ENCODE measurements at regions of chr6 and their contacts with region 1.

Region 1: GRCh38 chr6:3438190-3439167 is 18.4 kb downstream of the SLC22A23 start:
- DNase-seq: peak; percentile 88
- ATAC-seq: peak; percentile 97
- H3K4me3 ChIP-seq: no peak overlapping the region
- H3K27ac ChIP-seq: peak overlapping the region; percentile 78
- H3K4me1 ChIP-seq: peaks cover 32% of the 10 kb centered on the region
- H3K27me3 ChIP-seq: no peaks in the 10 kb centered on the region
- CTCF ChIP-seq: no peak

Region 2: DNA sequence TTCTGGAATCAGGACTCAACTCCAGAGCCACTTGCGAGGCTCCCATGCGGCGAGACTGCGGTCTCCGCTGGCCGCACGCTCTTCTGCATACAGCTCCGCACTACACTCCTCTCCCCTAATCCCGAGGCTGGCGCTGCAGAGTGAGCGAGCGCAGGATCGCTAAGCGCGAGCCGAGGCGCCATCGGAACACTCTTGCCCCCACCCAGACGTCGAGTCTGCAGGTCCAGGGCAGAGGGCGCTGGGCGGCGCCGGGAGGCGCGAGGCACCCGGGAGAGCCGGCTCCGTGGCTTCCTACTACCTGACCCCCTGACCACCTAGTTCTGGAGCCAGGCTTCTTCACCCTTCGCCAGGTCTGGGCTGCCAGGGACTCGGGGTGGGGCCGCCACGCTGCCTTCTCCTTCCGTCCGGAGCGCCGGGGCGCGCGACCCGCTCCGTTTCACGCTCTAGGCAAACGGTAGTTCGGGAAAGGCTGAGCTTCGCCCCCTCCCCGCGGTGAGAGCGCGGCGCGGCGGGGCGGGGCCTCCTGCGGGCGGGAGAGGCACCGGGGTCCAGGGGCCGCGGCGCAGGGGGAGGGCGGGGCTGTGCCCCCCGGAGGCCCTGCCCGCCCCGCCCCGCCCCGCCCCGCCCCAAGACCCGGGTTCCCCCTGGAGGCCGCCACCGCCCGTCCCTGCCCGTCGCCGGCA is 275.8 kb before region 1 on chr6:
- CTCF ChIA-PET with region 1: no interaction called
- POLR2A ChIA-PET with region 1: interaction called, 12 read pairs
- intact Hi-C with region 1: no loop called
- DNase-seq: peak; percentile 78
- ATAC-seq: peak; percentile 82
- H3K4me3 ChIP-seq: peak overlapping the region; percentile 74
- H3K27ac ChIP-seq: peak overlapping the region; percentile 69
- H3K4me1 ChIP-seq: peaks cover 27% of the 10 kb centered on the region
- H3K27me3 ChIP-seq: no peaks in the 10 kb centered on the region
- CTCF ChIP-seq: no peak

Region 3: DNA sequence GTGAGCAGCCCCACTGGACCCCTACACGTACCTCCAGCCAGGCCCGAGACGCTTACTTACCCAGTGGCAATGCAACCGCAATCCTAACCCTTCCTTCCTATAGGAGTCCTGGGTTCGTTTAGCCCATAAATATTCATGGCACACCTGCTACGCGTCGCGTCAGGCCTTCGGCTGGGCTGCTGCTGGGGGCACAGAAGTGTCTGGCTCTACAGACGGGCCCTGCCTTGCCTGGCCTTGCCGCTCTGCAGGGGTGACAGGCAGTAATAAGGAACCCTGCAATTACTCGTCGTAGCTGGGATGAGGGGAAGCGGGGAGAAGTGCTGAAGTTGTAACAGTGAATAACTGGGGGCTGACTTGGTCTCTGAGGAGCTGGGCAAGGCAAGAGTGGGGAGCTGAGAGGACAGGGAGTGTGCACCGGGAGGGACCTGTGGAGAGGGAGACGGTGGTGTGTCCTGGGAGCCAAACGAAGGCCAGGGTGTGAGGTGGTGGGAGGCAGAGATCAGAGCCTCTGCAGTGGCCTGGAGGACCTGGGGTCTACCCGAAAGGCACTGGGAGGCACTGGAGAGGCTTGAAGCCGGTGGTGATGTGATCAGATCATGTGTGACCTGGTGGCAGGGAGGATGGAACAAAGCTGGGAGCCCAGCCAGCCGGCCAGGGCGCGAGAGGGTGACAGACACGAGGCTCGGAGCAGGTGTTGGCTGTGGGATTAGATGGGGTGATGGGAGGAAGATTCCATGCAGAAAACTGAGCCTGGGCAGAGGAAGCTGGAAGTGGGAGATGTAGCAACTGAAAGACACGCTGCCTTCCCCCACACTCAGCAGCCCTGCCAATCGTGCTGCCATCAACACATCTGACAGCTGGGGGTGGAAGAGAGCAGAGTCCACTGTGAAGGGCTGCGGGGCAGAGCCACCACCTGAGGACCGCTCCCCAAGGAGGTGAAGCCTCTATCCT is 143.3 kb before region 1 on chr6:
- CTCF ChIA-PET with region 1: no interaction called
- POLR2A ChIA-PET with region 1: interaction called, 13 read pairs
- intact Hi-C with region 1: no loop called
- DNase-seq: peak; percentile 20
- ATAC-seq: no peak; the same call in 1 of the 2 replicates
- H3K4me3 ChIP-seq: no peak overlapping the region
- H3K27ac ChIP-seq: no peak overlapping the region
- H3K4me1 ChIP-seq: peaks cover 18% of the 10 kb centered on the region
- H3K27me3 ChIP-seq: no peaks in the 10 kb centered on the region
- CTCF ChIP-seq: peak; percentile 41

Region 4: GRCh38 chr6:3356056-3356761 is 82.3 kb before region 1 on chr6:
- CTCF ChIA-PET with region 1: no interaction called
- POLR2A ChIA-PET with region 1: no interaction called
- intact Hi-C with region 1: no loop called
- DNase-seq: peak; percentile 57
- ATAC-seq: peak; percentile 57
- H3K4me3 ChIP-seq: peak overlapping the region; percentile 60
- H3K27ac ChIP-seq: peak overlapping the region; percentile 75
- H3K4me1 ChIP-seq: peaks cover 23% of the 10 kb centered on the region
- H3K27me3 ChIP-seq: no peaks in the 10 kb centered on the region
- CTCF ChIP-seq: no peak

Region 5: DNA sequence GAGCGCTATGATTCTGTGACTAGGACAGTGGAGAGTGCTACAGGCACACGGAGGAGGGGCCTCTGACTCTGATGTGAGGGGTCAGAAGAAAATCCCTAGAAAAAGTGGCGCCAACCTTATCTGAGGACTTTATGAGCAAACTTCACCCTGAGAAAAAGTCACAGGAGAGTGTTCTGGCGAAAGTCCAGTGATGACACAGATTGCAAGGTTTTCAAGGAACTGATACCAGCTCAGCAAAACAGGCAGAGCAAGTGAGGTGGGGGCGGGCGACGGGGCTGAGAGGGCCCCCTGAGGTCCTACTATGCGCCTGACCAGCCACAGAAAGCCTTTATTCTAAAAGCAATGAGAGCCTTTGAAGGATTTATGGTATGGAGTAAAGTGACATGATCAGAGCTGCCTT is 55.0 kb before region 1 on chr6:
- CTCF ChIA-PET with region 1: no interaction called
- POLR2A ChIA-PET with region 1: no interaction called
- intact Hi-C with region 1: loop called (anchors 5 kb)
- DNase-seq: peak; percentile 85
- ATAC-seq: peak; percentile 11
- H3K4me3 ChIP-seq: no peak overlapping the region
- H3K27ac ChIP-seq: peak overlapping the region; percentile 94
- H3K4me1 ChIP-seq: peaks cover 56% of the 10 kb centered on the region
- H3K27me3 ChIP-seq: no peaks in the 10 kb centered on the region
- CTCF ChIP-seq: no peak

Region 6: DNA sequence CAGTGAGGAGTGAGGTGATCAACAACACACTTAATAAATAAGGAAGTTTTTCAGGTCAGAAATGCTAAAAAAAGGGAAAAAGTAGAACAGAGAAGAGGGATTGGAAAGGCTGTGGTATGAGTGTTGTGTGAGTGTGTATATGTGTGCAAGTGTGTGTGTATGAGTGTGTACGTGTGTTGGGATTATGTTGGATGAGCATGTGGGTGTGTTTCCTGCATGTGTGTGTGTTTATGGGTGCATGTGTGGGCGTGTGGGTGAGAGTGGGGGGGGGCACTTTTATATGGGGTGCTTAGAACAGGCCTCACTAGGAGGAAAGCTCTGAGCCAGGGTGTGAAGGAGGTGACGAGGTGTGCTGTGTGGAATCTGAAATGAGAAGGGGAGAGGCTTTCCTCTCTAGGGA is 135.2 kb after region 1 on chr6:
- CTCF ChIA-PET with region 1: no interaction called
- POLR2A ChIA-PET with region 1: interaction called, 31 read pairs
- intact Hi-C with region 1: no loop called
- DNase-seq: no peak
- ATAC-seq: no peak
- H3K4me3 ChIP-seq: no peak overlapping the region
- H3K27ac ChIP-seq: no peak overlapping the region
- H3K4me1 ChIP-seq: no peaks in the 10 kb centered on the region
- H3K27me3 ChIP-seq: no peaks in the 10 kb centered on the region
- CTCF ChIP-seq: no peak

Region 7: GRCh38 chr6:3654436-3655297 is 216.2 kb after region 1 on chr6:
- CTCF ChIA-PET with region 1: no interaction called
- POLR2A ChIA-PET with region 1: no interaction called
- intact Hi-C with region 1: no loop called
- DNase-seq: no peak
- ATAC-seq: no peak
- H3K4me3 ChIP-seq: no peak overlapping the region
- H3K27ac ChIP-seq: no peak overlapping the region
- H3K4me1 ChIP-seq: no peaks in the 10 kb centered on the region
- H3K27me3 ChIP-seq: no peaks in the 10 kb centered on the region
- CTCF ChIP-seq: no peak